ENCODE measurements at regions of chr7 and their contacts with region 1.

Region 1: DNA sequence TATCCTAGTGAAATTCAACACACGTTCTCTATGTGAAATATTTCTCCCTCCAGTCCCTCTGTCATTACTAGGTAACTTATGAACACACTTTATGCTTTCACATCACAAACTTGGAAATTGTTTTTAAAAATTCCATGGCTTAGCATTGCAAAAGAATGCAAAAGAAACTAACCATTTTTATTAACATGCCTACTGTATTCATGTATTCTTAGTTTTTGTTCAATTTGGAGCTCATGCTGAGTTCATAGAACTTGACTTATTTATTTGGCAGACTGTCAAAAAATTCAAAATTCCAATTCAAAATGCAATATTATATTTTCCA is 155.0 kb upstream of the SEMA3C start:
- DNase-seq: no peak
- H3K4me3 Mint-ChIP-seq: peak overlapping the region; percentile 51
- H3K27ac Mint-ChIP-seq: peak overlapping the region; percentile 99
- H3K4me1 Mint-ChIP-seq: peaks cover 22% of the 10 kb centered on the region
- H3K27me3 Mint-ChIP-seq: no peaks in the 10 kb centered on the region
- CTCF ChIP-seq: no peak

Region 2: GRCh38 chr7:80941208-80941758 is 132.6 kb before region 1 on chr7:
- CTCF ChIA-PET with region 1: no interaction called
- intact Hi-C with region 1: loop called (anchors 1 kb)
- DNase-seq: no peak
- H3K4me3 Mint-ChIP-seq: peak overlapping the region; percentile 25
- H3K27ac Mint-ChIP-seq: peak overlapping the region; percentile 89
- H3K4me1 Mint-ChIP-seq: peaks cover 29% of the 10 kb centered on the region
- H3K27me3 Mint-ChIP-seq: no peaks in the 10 kb centered on the region
- CTCF ChIP-seq: no peak